ENCODE measurements at regions of chr5 and their contacts with region 1.

Region 1: GRCh38 chr5:96687812-96688453 is 25.8 kb downstream of the CAST start:
- DNase-seq: no peak
- ATAC-seq: peak; percentile 61 to 85
- H3K4me3 ChIP-seq: no peak overlapping the region
- H3K27ac ChIP-seq: no peak overlapping the region
- H3K4me1 ChIP-seq: peaks cover 12 to 25% of the 10 kb centered on the region in 2 donors
- H3K27me3 ChIP-seq: no peaks in the 10 kb centered on the region
- CTCF ChIP-seq: peak; percentile 47 to 66 (median 51)
- POLR2A ChIP-seq: no peak

Region 2: GRCh38 chr5:96344678-96345577 is 343.0 kb before region 1 on chr5:
- in situ Hi-C with region 1: loop called in 1 of 4 experiments (anchors 10 kb)
- intact Hi-C with region 1: no loop called
- DNase-seq: no peak
- ATAC-seq: peak; percentile 93 to 97
- H3K4me3 ChIP-seq: no peak overlapping the region
- H3K27ac ChIP-seq: no peak overlapping the region
- H3K4me1 ChIP-seq: peaks cover under 1 to 7% of the 10 kb centered on the region in 2 donors
- H3K27me3 ChIP-seq: no peaks in the 10 kb centered on the region
- CTCF ChIP-seq: peak; percentile 35 to 63 (median 59)
- POLR2A ChIP-seq: no peak

Region 3: GRCh38 chr5:96614110-96614691 is 73.7 kb before region 1 on chr5:
- in situ Hi-C with region 1: loop called in 2 of 4 experiments (anchors 5 to 10 kb)
- intact Hi-C with region 1: loop called (anchors 1 kb)
- DNase-seq: peak; percentile 42 to 57
- ATAC-seq: peak; percentile 97 to 99
- H3K4me3 ChIP-seq: no peak overlapping the region
- H3K27ac ChIP-seq: peak overlapping the region; percentile 46 to 75 (median 60)
- H3K4me1 ChIP-seq: peaks cover 4 to 16% of the 10 kb centered on the region in 2 donors
- H3K27me3 ChIP-seq: no peaks in the 10 kb centered on the region
- CTCF ChIP-seq: peak; percentile 61 to 76 (median 64)
- POLR2A ChIP-seq: no peak

Region 4: GRCh38 chr5:96626956-96627355 is 61.0 kb before region 1 on chr5:
- in situ Hi-C with region 1: no loop called
- intact Hi-C with region 1: no loop called
- DNase-seq: no peak
- ATAC-seq: no peak
- H3K4me3 ChIP-seq: no peak overlapping the region
- H3K27ac ChIP-seq: no peak overlapping the region
- H3K4me1 ChIP-seq: no peaks in the 10 kb centered on the region
- H3K27me3 ChIP-seq: no peaks in the 10 kb centered on the region
- CTCF ChIP-seq: no peak
- POLR2A ChIP-seq: no peak

Region 5: GRCh38 chr5:96651948-96652753 is 35.8 kb before region 1 on chr5:
- in situ Hi-C with region 1: no loop called
- intact Hi-C with region 1: loop called (anchors 5 kb)
- DNase-seq: no peak
- ATAC-seq: no peak
- H3K4me3 ChIP-seq: no peak overlapping the region
- H3K27ac ChIP-seq: no peak overlapping the region
- H3K4me1 ChIP-seq: peaks cover 15 to 26% of the 10 kb centered on the region in 2 donors
- H3K27me3 ChIP-seq: no peaks in the 10 kb centered on the region
- CTCF ChIP-seq: peak in 2 of 5 experiments; percentile 11 to 38
- POLR2A ChIP-seq: no peak

Region 6: DNA sequence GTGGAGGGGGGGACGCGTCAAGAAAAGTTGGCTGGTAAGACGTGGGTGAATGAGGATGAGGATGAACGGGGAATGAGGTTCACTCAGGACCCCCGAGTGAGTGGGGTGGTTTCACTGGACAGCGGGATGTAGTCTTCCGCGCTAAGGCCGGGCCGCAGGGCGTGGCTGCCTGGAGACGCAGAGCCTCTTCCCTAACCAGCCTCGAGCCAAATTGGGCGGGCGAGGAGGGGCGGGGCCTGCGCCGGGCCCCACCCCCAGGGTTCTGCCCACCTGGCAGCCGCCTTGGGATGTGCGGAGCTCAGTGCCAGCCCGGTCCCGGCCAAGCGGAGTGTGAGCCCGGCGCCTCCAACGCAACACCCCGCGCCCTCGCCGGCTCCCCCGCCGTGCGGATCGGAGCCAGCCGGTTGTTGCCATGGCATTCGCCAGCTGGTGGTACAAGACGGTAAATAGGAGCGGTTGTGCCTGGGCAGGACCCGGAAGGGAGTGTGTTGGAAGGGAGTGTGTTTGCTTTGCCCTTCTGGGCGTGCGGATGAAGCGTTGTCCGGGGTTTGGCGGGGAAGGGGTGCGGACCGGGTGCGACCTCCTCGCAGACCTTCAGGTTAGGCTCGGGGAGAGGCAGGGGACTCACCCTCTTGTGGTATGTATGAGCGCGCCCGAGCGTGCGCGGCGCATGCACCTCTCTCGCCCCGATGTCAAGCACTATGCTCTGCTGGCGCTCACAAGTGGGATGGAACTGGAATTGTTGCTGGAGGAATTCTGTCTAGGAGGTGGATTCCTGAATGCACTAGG is 25.0 kb before region 1 on chr5:
- in situ Hi-C with region 1: no loop called
- intact Hi-C with region 1: loop called (anchors 2 kb)
- DNase-seq: peak; percentile 88 to 94
- ATAC-seq: peak; percentile 80 to 84
- H3K4me3 ChIP-seq: peak overlapping the region; percentile 72 to 98 (median 88)
- H3K27ac ChIP-seq: peak overlapping the region; percentile 94 to 98 (median 96)
- H3K4me1 ChIP-seq: peaks cover 25 to 28% of the 10 kb centered on the region in 2 donors
- H3K27me3 ChIP-seq: no peaks in the 10 kb centered on the region
- CTCF ChIP-seq: peak in 2 of 5 experiments; percentile 4 to 19
- POLR2A ChIP-seq: peak; percentile 89

Region 7: GRCh38 chr5:96702503-96703383 is 14.8 kb after region 1 on chr5:
- in situ Hi-C with region 1: no loop called
- intact Hi-C with region 1: loop called (anchors 1 kb)
- DNase-seq: peak; percentile 97 to 98
- ATAC-seq: peak; percentile 49 to 68
- H3K4me3 ChIP-seq: peak overlapping the region; percentile 63 to 87 (median 79)
- H3K27ac ChIP-seq: peak overlapping the region; percentile 94 to 99 (median 98)
- H3K4me1 ChIP-seq: peaks cover 38 to 75% of the 10 kb centered on the region in 2 donors
- H3K27me3 ChIP-seq: no peaks in the 10 kb centered on the region
- CTCF ChIP-seq: no peak
- POLR2A ChIP-seq: peak; percentile 90 to 93

Region 8: GRCh38 chr5:96823900-96824351 is 136.0 kb after region 1 on chr5:
- in situ Hi-C with region 1: no loop called
- intact Hi-C with region 1: loop called (anchors 1 kb)
- DNase-seq: no peak
- ATAC-seq: no peak
- H3K4me3 ChIP-seq: no peak overlapping the region
- H3K27ac ChIP-seq: no peak overlapping the region
- H3K4me1 ChIP-seq: no peaks in the 10 kb centered on the region
- H3K27me3 ChIP-seq: no peaks in the 10 kb centered on the region
- CTCF ChIP-seq: no peak
- POLR2A ChIP-seq: no peak

Measured in gastrocnemius medialis (tissue), 4 donors.